CD4-positive, alpha-beta memory T cell (primary cell): ENCODE measurements at regions of chr6 and their contacts with region 1.

Region 1: GRCh38 chr6:57172136-57173055 is at the start of gene BAG2:
- DNase-seq: peak; percentile 83 to 93 (median 83)
- H3K4me3 ChIP-seq: peak within 1 kb of the TSS; percentile 55 to 71
- H3K4me3 Mint-ChIP-seq: peak within 1 kb of the TSS; percentile 88 to 96 (median 92)
- H3K27ac ChIP-seq: peak within 1 kb of the TSS; percentile 57
- H3K27ac Mint-ChIP-seq: peak within 1 kb of the TSS; percentile 78 to 98 (median 94)
- H3K4me1 ChIP-seq: peaks cover 13% of the 10 kb centered on the region
- H3K4me1 Mint-ChIP-seq: peaks cover 19 to 45% (median 27%) of the 10 kb centered on the region in 4 donors
- H3K27me3 ChIP-seq: no peaks in the 10 kb centered on the region
- H3K27me3 Mint-ChIP-seq: no peaks in the 10 kb centered on the region
- total RNA-seq, gene BAG2: 3.5 to 3.7 TPM

Region 2: DNA sequence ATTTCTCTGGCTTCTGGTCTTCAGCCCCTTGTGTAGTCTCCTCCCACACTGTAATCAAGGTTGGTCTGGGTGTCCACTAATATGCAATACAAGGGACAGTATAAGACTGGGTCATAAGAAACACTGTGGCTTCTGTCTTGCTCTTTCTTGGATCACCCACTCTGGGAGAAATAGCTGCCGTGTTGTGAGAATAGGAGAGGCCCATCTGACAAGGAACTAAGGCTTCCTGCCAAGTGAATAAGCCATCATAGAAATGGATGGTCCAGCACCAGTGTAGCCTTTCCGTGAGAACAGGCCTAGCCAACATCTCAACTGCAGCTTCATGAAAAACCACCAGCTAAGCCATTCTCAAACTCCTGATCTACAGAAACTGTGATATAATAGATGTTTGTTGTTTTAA is 23.1 kb after region 1 on chr6:
- CTCF ChIA-PET with region 1: no interaction called
- POLR2A ChIA-PET with region 1: no interaction called
- intact Hi-C with region 1: no loop called
- DNase-seq: no peak
- H3K4me3 ChIP-seq: no peak overlapping the region
- H3K4me3 Mint-ChIP-seq: no peak overlapping the region
- H3K27ac ChIP-seq: no peak overlapping the region
- H3K27ac Mint-ChIP-seq: no peak overlapping the region
- H3K4me1 ChIP-seq: no peaks in the 10 kb centered on the region
- H3K4me1 Mint-ChIP-seq: no peaks in the 10 kb centered on the region
- H3K27me3 ChIP-seq: no peaks in the 10 kb centered on the region
- H3K27me3 Mint-ChIP-seq: no peaks in the 10 kb centered on the region

Region 3: GRCh38 chr6:57221936-57222742 is 49.7 kb after region 1 on chr6 and contains the start of gene RAB23:
- CTCF ChIA-PET with region 1: interaction called, 5 read pairs
- POLR2A ChIA-PET with region 1: interaction called, 8 read pairs
- intact Hi-C with region 1: loop called (anchors 1 kb)
- DNase-seq: peak; percentile 72 to 89 (median 85)
- H3K4me3 ChIP-seq: peak within 1 kb of the TSS; percentile 64 to 96
- H3K4me3 Mint-ChIP-seq: peak within 1 kb of the TSS; percentile 98 to 100 (median 98)
- H3K27ac ChIP-seq: peak within 1 kb of the TSS; percentile 35
- H3K27ac Mint-ChIP-seq: peak within 1 kb of the TSS; percentile 87 to 97 (median 93)
- H3K4me1 ChIP-seq: peaks cover 10% of the 10 kb centered on the region
- H3K4me1 Mint-ChIP-seq: peaks cover 6 to 10% (median 9%) of the 10 kb centered on the region in 4 donors
- H3K27me3 ChIP-seq: peaks cover 5% of the 10 kb centered on the region
- H3K27me3 Mint-ChIP-seq: peaks cover 13 to 27% of the 10 kb centered on the region in 2 donors
- total RNA-seq, gene RAB23: 1.4 to 1.6 TPM

Region 4: DNA sequence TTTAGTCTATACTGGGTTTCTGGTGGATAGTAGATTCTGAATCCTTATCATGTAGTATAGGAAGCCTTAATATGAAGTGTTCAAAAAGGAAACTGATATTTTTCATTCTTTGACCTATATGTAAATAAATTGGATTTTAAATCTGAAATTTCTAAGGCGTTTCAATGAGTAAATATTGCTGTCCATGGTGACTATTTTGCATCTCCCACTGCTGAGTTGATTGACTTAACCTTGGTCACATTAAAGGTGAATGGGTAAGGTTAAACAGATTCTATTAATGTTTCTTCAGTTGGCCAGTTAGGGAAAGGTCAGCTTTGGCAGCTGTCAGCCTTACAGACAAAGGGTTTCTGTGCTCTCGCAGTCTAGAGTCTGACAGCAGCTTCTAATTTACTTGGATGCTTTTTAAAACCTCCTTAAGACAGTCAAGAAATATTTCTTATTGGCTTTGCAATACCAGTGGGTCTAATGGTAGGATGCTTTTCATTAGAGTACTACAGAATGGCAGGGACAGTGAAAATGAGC is 169.8 kb after region 1 on chr6:
- CTCF ChIA-PET with region 1: no interaction called
- POLR2A ChIA-PET with region 1: no interaction called
- intact Hi-C with region 1: no loop called
- DNase-seq: no peak
- H3K4me3 ChIP-seq: no peak overlapping the region
- H3K4me3 Mint-ChIP-seq: no peak overlapping the region
- H3K27ac ChIP-seq: no peak overlapping the region
- H3K27ac Mint-ChIP-seq: no peak overlapping the region
- H3K4me1 ChIP-seq: no peaks in the 10 kb centered on the region
- H3K4me1 Mint-ChIP-seq: peaks cover 4 to 10% (median 9%) of the 10 kb centered on the region in 4 donors
- H3K27me3 ChIP-seq: no peaks in the 10 kb centered on the region
- H3K27me3 Mint-ChIP-seq: no peaks in the 10 kb centered on the region